Heart left ventricle (tissue), 16 donors: ENCODE measurements at regions of chr1 and their contacts with region 1.

Region 1: GRCh38 chr1:165073185-165074007 is 283.1 kb downstream of the LMX1A start:
- DNase-seq: no peak
- ATAC-seq: peak in 3 of 4 donors; percentile 63 to 75 (median 70)
- H3K4me3 ChIP-seq: no peak overlapping the region
- H3K27ac ChIP-seq: peak overlapping the region in 1 of 12 donors; percentile 13
- H3K4me1 ChIP-seq: peaks cover 0 to 10% (median 0%) of the 10 kb centered on the region in 12 donors
- H3K27me3 ChIP-seq: no peaks in the 10 kb centered on the region
- CTCF ChIP-seq: peak; percentile 61 to 88 (median 80)
- POLR2A ChIP-seq: no peak

Region 2: DNA sequence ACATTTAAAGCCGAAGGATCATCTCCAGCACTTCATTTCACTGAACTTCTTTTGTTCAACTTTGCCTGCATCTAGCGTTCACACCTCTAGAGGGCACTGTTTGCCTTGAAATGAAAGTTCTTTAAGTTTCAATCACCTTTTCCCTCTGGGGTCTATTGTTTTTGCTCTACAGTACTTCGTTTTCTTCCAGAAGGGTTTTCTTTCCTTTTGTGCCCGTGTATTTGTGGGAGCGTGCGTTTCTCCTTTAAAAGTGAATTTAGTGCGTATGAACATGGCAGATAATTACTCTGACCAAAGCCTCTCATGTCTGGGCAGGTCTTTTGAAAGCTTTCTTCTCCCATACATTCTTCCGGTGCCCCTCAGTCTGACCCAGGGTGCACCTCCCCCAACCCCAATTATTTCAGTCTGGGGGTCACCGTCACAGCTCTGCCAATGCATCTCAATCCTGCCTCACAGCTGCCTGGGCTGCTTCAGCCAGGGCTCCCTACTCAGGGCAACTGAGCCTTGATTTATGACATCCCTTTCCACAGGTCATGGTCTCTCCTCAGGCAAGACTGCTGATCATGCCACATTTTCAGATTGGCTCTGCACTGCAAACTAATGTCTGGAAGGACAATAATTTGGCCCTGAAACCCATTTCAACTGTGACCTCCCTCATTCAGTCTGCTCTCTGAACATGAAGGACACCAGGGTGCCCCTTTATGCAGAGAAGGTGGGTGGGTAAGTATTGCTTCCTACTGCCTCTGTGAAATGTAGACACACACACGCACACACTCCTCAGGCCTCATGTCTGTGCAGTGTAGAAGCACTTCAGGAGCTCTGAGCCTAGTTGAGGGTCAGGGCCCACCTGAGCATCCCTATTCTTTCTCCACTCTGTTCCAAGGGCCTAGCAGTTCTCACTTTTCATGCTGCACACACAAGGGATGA is 1663.1 kb before region 1 on chr1:
- intact Hi-C with region 1: loop called in 9 of 10 experiments (anchors 5 to 10 kb)
- DNase-seq: no peak
- ATAC-seq: no peak
- H3K4me3 ChIP-seq: peak overlapping the region in 2 of 12 donors; percentile 8 to 20
- H3K27ac ChIP-seq: no peak overlapping the region
- H3K4me1 ChIP-seq: peaks cover 0 to 7% (median 0%) of the 10 kb centered on the region in 12 donors
- H3K27me3 ChIP-seq: peaks cover 0 to 4% (median 0%) of the 10 kb centered on the region in 9 donors
- CTCF ChIP-seq: peak; percentile 62 to 84 (median 72)
- POLR2A ChIP-seq: no peak

Region 3: DNA sequence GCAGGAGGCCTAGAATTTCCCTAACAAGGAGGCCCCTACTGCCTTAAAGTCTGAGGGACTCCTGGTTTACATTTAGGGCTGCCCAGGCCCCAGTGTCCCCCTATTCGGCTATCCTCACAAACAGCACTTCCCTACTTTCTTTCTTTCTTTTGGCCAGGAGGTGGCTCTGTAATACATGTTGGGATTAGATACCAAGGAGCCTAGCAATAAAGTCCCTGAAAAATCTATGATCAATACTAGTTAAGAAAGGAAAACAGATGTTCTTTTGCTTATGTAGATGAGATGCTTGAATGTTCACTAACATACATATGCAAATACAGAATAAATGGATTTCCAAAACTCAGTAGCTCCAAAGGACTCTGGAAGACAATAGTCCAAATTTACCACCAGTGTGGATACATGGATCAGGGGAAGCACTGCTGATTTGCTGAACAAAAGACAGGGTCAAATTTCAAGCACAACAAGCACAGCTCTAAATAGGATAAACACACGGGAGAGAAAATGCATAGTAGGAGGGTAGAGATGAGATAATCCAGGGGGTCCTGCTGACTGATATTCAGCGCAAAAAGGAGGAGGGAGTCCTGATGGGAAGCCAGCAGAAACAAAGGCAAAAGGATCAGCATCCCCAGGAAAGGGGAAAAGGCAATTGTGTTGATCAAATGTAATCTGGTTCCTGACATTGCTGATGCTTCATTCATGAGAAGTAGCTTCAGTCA is 1511.7 kb before region 1 on chr1:
- intact Hi-C with region 1: loop called in 1 of 10 experiments (anchors 10 kb)
- DNase-seq: no peak
- ATAC-seq: peak in 2 of 4 donors; percentile 47 to 63
- H3K4me3 ChIP-seq: no peak overlapping the region
- H3K27ac ChIP-seq: no peak overlapping the region
- H3K4me1 ChIP-seq: no peaks in the 10 kb centered on the region
- H3K27me3 ChIP-seq: no peaks in the 10 kb centered on the region
- CTCF ChIP-seq: peak in 11 of 12 donors; percentile 23 to 64 (median 46)
- POLR2A ChIP-seq: no peak

Region 4: GRCh38 chr1:164617377-164618201 is 455.8 kb before region 1 on chr1:
- intact Hi-C with region 1: loop called in 1 of 10 experiments (anchors 10 kb)
- DNase-seq: no peak
- ATAC-seq: no peak
- H3K4me3 ChIP-seq: no peak overlapping the region
- H3K27ac ChIP-seq: peak overlapping the region in 2 of 12 donors; percentile 35 to 73
- H3K4me1 ChIP-seq: peaks cover 4 to 91% (median 42%) of the 10 kb centered on the region in 12 donors
- H3K27me3 ChIP-seq: no peaks in the 10 kb centered on the region
- CTCF ChIP-seq: peak; percentile 18 to 58 (median 45)
- POLR2A ChIP-seq: no peak

Region 5: DNA sequence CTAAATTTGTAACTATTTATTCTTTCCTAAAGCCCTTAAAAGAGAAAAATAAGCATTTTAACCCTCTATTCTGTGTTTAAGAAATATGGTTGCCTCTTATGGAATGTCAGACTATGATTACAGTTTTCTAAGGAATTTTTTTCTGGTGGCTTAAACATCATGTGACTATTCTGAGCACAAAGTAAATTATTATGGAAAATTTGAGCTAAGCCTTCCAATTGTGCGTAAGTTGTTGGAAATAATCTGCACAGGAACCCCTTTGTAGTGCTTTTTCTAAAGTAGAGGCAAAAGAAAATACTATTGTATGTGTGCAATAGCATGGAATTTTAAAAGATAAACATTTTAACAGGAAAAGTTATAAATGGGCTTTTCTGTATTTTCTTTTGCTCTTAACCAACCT is 259.6 kb before region 1 on chr1:
- intact Hi-C with region 1: loop called in 4 of 10 experiments (anchors 10 kb)
- DNase-seq: no peak
- ATAC-seq: no peak
- H3K4me3 ChIP-seq: no peak overlapping the region
- H3K27ac ChIP-seq: no peak overlapping the region
- H3K4me1 ChIP-seq: peaks cover 0 to 8% (median 0%) of the 10 kb centered on the region in 12 donors
- H3K27me3 ChIP-seq: no peaks in the 10 kb centered on the region
- CTCF ChIP-seq: no peak
- POLR2A ChIP-seq: no peak